GM12878 (cell line): ENCODE measurements at regions of chr12 and their contacts with region 1.

Region 1: GRCh38 chr12:40921563-40922163 is 229.4 kb downstream of the CNTN1 start:
- DNase-seq: no peak
- ATAC-seq: peak; percentile 49; the same call in 2 of the 3 replicates
- H3K4me3 ChIP-seq: no peak overlapping the region
- H3K27ac ChIP-seq: no peak overlapping the region
- H3K4me1 ChIP-seq: no peaks in the 10 kb centered on the region
- H3K27me3 ChIP-seq: no peaks in the 10 kb centered on the region
- CTCF ChIP-seq: peak; percentile 34 to 60 (median 53); a peak in 5 of 6 replicates
- EP300 ChIP-seq: no peak
- POLR2A ChIP-seq: no peak
- RAD21 ChIP-seq: peak; percentile 73

Region 2: DNA sequence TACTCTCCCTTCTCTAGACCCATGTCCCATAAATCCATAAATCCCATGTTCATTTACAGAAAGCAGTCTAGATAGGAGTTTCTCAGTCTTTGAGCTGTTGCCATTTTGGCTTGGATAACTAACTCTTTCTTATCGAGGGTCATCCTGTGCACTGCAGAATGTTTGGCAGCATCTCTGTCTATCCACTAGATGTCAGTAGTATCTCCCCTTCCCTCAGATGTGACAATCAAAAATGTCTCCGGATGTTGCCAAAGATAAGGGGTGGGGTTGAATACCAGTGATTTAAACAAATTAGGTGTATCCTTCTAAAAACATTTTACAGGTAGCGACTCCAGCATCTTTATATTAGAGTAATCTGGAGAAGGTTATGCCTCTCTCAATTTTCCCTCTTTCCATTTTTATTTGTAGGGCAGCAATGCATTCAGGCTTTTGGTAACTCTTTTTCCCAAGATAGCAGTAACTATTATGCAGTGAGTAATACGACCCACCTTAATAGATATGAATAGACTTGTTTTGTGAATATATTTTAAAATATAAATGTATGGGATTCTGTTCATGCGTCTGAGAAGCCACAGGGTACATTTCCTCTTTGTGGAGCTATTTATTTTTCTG is 596.2 kb before region 1 on chr12:
- CTCF ChIA-PET with region 1: no interaction called
- POLR2A ChIA-PET with region 1: no interaction called
- RAD21 ChIA-PET with region 1: interaction called, 3 read pairs
- SMC1A ChIA-PET with region 1: no interaction called
- in situ Hi-C with region 1: loop called (anchors 10 kb)
- intact Hi-C with region 1: no loop called
- DNase-seq: no peak
- ATAC-seq: peak; percentile 98
- H3K4me3 ChIP-seq: no peak overlapping the region
- H3K27ac ChIP-seq: no peak overlapping the region
- H3K4me1 ChIP-seq: no peaks in the 10 kb centered on the region
- H3K27me3 ChIP-seq: no peaks in the 10 kb centered on the region
- CTCF ChIP-seq: peak; percentile 60 to 80 (median 78)
- EP300 ChIP-seq: no peak
- POLR2A ChIP-seq: no peak
- RAD21 ChIP-seq: peak; percentile 69

Region 3: DNA sequence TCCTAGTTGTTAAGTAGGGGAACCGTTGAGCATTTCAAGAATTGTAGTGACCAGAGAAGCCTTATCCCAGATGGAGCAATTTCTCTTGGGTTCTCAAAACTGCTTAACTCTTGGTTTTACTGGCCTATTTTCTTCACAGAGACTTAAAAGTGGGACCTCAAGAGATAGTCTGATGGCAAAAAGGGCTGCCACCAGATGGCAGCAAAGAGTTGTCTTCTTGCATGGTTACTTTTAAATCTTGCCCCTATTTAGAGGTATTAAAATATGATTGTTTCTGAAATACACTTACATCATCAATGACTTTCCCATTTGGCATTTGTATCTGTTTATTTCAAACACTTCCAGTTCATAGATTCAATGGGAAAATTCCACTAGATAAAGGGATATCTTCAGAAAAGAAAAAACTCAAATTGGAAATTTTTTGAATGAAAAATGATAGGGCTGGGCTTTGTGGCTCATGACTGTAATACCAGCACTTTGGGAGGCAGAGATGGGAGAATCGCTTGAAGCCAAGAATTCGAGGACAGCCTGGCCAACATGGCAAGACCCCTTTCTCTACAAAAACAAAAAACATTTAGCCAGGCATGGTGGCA is 299.3 kb before region 1 on chr12:
- CTCF ChIA-PET with region 1: interaction called, 9 read pairs
- POLR2A ChIA-PET with region 1: interaction called, 5 read pairs
- RAD21 ChIA-PET with region 1: interaction called, 3 read pairs
- SMC1A ChIA-PET with region 1: interaction called, 10 read pairs
- in situ Hi-C with region 1: loop called (anchors 5 kb)
- intact Hi-C with region 1: loop called (anchors 1 kb)
- DNase-seq: no peak
- ATAC-seq: peak; percentile 82
- H3K4me3 ChIP-seq: no peak overlapping the region
- H3K27ac ChIP-seq: no peak overlapping the region
- H3K4me1 ChIP-seq: no peaks in the 10 kb centered on the region
- H3K27me3 ChIP-seq: no peaks in the 10 kb centered on the region
- CTCF ChIP-seq: peak; percentile 66 to 82 (median 71)
- EP300 ChIP-seq: no peak
- POLR2A ChIP-seq: no peak
- RAD21 ChIP-seq: peak; percentile 77